Esophagus squamous epithelium (tissue), 5 donors: ENCODE measurements at regions of chr10 and their contacts with region 1.

Region 1: GRCh38 chr10:72364239-72364777 is 9.6 kb upstream of the DNAJB12 start:
- DNase-seq: peak; percentile 61
- H3K4me3 ChIP-seq: peak overlapping the region in 1 of 4 donors; percentile 37
- H3K27ac ChIP-seq: peak overlapping the region; percentile 10 to 77 (median 49)
- H3K4me1 ChIP-seq: peaks cover 7 to 14% (median 9%) of the 10 kb centered on the region in 3 donors
- H3K27me3 ChIP-seq: no peaks in the 10 kb centered on the region
- CTCF ChIP-seq: peak; percentile 86 to 97 (median 94)
- POLR2A ChIP-seq: peak in 1 of 4 donors; percentile 26

Region 2: GRCh38 chr10:73060738-73061635 is 696.7 kb after region 1 on chr10:
- intact Hi-C with region 1: loop called (anchors 10 kb)
- DNase-seq: no peak
- H3K4me3 ChIP-seq: no peak overlapping the region
- H3K27ac ChIP-seq: peak overlapping the region in 1 of 4 donors; percentile 3
- H3K4me1 ChIP-seq: no peaks in the 10 kb centered on the region
- H3K27me3 ChIP-seq: no peaks in the 10 kb centered on the region
- CTCF ChIP-seq: peak in 4 of 6 experiments; percentile 27 to 61 (median 35)
- POLR2A ChIP-seq: no peak